PC-9 (cell line): ENCODE measurements at regions of chr10 and their contacts with region 1.

Region 1: GRCh38 chr10:57657164-57657765 is 610.4 kb downstream of the IPMK start:
- DNase-seq: peak; percentile 43 to 47
- H3K4me3 ChIP-seq: no peak overlapping the region
- H3K27ac ChIP-seq: no peak overlapping the region
- H3K4me1 ChIP-seq: no peaks in the 10 kb centered on the region
- H3K27me3 ChIP-seq: no peaks in the 10 kb centered on the region
- CTCF ChIP-seq: peak; percentile 89

Region 2: DNA sequence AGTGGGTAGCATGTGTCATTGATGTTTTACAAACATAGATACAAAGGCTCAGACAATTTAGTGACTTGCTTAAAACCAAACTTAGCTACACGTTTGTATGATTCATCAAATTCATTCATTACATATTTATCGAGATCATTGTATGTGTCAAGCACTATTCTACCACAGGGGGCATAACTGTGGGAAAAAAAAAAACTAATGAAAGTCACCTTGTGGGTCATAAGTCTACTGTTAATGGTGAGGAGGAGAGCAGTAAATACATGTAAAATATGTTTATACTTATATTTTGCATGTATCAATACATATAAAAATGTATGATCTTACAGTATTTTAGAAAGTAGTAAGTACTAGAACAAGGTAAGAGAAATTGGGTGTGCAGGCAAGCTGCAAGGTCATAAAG is 323.4 kb before region 1 on chr10:
- CTCF ChIA-PET with region 1: interaction called, 16 read pairs
- POLR2A ChIA-PET with region 1: no interaction called
- intact Hi-C with region 1: loop called (anchors 1 kb)
- DNase-seq: no peak
- H3K4me3 ChIP-seq: no peak overlapping the region
- H3K27ac ChIP-seq: no peak overlapping the region
- H3K4me1 ChIP-seq: no peaks in the 10 kb centered on the region
- H3K27me3 ChIP-seq: no peaks in the 10 kb centered on the region
- CTCF ChIP-seq: peak; percentile 37; the same call in 1 of the 2 replicates

Region 3: GRCh38 chr10:57506414-57507094 is 150.7 kb before region 1 on chr10:
- CTCF ChIA-PET with region 1: no interaction called
- POLR2A ChIA-PET with region 1: no interaction called
- intact Hi-C with region 1: no loop called
- DNase-seq: no peak
- H3K4me3 ChIP-seq: no peak overlapping the region
- H3K27ac ChIP-seq: no peak overlapping the region
- H3K4me1 ChIP-seq: no peaks in the 10 kb centered on the region
- H3K27me3 ChIP-seq: no peaks in the 10 kb centered on the region
- CTCF ChIP-seq: no peak

Region 4: GRCh38 chr10:57579926-57580325 is 77.3 kb before region 1 on chr10:
- CTCF ChIA-PET with region 1: interaction called, 11 read pairs
- POLR2A ChIA-PET with region 1: no interaction called
- intact Hi-C with region 1: no loop called
- DNase-seq: no peak
- H3K4me3 ChIP-seq: no peak overlapping the region
- H3K27ac ChIP-seq: no peak overlapping the region
- H3K4me1 ChIP-seq: no peaks in the 10 kb centered on the region
- H3K27me3 ChIP-seq: no peaks in the 10 kb centered on the region
- CTCF ChIP-seq: peak; percentile 62

Region 5: GRCh38 chr10:57925044-57925443 is 267.8 kb after region 1 on chr10:
- CTCF ChIA-PET with region 1: no interaction called
- POLR2A ChIA-PET with region 1: no interaction called
- intact Hi-C with region 1: no loop called
- DNase-seq: peak; percentile 5 to 70
- H3K4me3 ChIP-seq: no peak overlapping the region
- H3K27ac ChIP-seq: no peak overlapping the region
- H3K4me1 ChIP-seq: peaks cover 23% of the 10 kb centered on the region
- H3K27me3 ChIP-seq: no peaks in the 10 kb centered on the region
- CTCF ChIP-seq: no peak

Region 6: GRCh38 chr10:58064714-58065528 is 407.7 kb after region 1 on chr10:
- CTCF ChIA-PET with region 1: no interaction called
- POLR2A ChIA-PET with region 1: no interaction called
- intact Hi-C with region 1: loop called (anchors 5 kb)
- DNase-seq: peak in 1 of 2 experiments; percentile 22
- H3K4me3 ChIP-seq: no peak overlapping the region
- H3K27ac ChIP-seq: no peak overlapping the region
- H3K4me1 ChIP-seq: no peaks in the 10 kb centered on the region
- H3K27me3 ChIP-seq: no peaks in the 10 kb centered on the region; the same call in 1 of the 2 replicates
- CTCF ChIP-seq: peak; percentile 86